ENCODE measurements at regions of chr16 and their contacts with region 1.

Region 1: GRCh38 chr16:67246934-67247697 is at the start of gene FHOD1:
- DNase-seq: peak; percentile 94
- H3K4me3 ChIP-seq: peak within 1 kb of the TSS; percentile 72 to 76 (median 72)
- H3K27ac ChIP-seq: peak within 1 kb of the TSS; percentile 63
- H3K4me1 ChIP-seq: peaks cover 57% of the 10 kb centered on the region
- H3K27me3 ChIP-seq: peaks cover 4% of the 10 kb centered on the region
- CTCF ChIP-seq: no peak
- total RNA-seq, gene FHOD1: 6.7 to 38.7 TPM

Region 2: GRCh38 chr16:66947302-66948065 is 299.6 kb before region 1 on chr16:
- CTCF ChIA-PET with region 1: no interaction called
- dilution Hi-C with region 1: no loop called
- in situ Hi-C with region 1: no loop called
- intact Hi-C with region 1: loop called (anchors 5 kb)
- DNase-seq: peak; percentile 78
- H3K4me3 ChIP-seq: peak overlapping the region; percentile 66 to 69 (median 68)
- H3K27ac ChIP-seq: peak overlapping the region; percentile 49
- H3K4me1 ChIP-seq: peaks cover 22% of the 10 kb centered on the region
- H3K27me3 ChIP-seq: no peaks in the 10 kb centered on the region
- CTCF ChIP-seq: peak; percentile 84 to 94

Region 3: GRCh38 chr16:67216612-67217490 is 30.3 kb before region 1 on chr16:
- CTCF ChIA-PET with region 1: no interaction called
- dilution Hi-C with region 1: no loop called
- in situ Hi-C with region 1: no loop called
- intact Hi-C with region 1: loop called (anchors 2 kb)
- DNase-seq: no peak
- H3K4me3 ChIP-seq: no peak overlapping the region
- H3K27ac ChIP-seq: no peak overlapping the region
- H3K4me1 ChIP-seq: peaks cover 16% of the 10 kb centered on the region
- H3K27me3 ChIP-seq: no peaks in the 10 kb centered on the region
- CTCF ChIP-seq: no peak

Region 4: GRCh38 chr16:67226804-67227557 is 20.1 kb before region 1 on chr16 and contains the start of gene TMEM208:
- CTCF ChIA-PET with region 1: interaction called, 4 read pairs
- dilution Hi-C with region 1: no loop called
- in situ Hi-C with region 1: no loop called
- intact Hi-C with region 1: loop called (anchors 1 kb)
- DNase-seq: peak; percentile 98
- H3K4me3 ChIP-seq: peak within 1 kb of the TSS; percentile 71 to 98 (median 86)
- H3K27ac ChIP-seq: peak within 1 kb of the TSS; percentile 73
- H3K4me1 ChIP-seq: peaks cover 11% of the 10 kb centered on the region
- H3K27me3 ChIP-seq: no peaks in the 10 kb centered on the region
- CTCF ChIP-seq: peak in 1 of 2 donors; percentile 22
- total RNA-seq, gene TMEM208: 24.5 to 43.1 TPM

Region 5: GRCh38 chr16:67279296-67280089 is 32.4 kb after region 1 on chr16 and contains the start of gene PLEKHG4:
- CTCF ChIA-PET with region 1: no interaction called
- dilution Hi-C with region 1: no loop called
- in situ Hi-C with region 1: no loop called
- intact Hi-C with region 1: loop called (anchors 2 kb)
- DNase-seq: peak; percentile 35
- H3K4me3 ChIP-seq: peak within 1 kb of the TSS in 2 of 3 experiments; percentile 19 to 26
- H3K27ac ChIP-seq: no peak within 1 kb of the TSS
- H3K4me1 ChIP-seq: peaks cover 29% of the 10 kb centered on the region
- H3K27me3 ChIP-seq: no peaks in the 10 kb centered on the region
- CTCF ChIP-seq: peak; percentile 38 to 57
- total RNA-seq, gene PLEKHG4: 1.2 to 1.7 TPM

Region 6: DNA sequence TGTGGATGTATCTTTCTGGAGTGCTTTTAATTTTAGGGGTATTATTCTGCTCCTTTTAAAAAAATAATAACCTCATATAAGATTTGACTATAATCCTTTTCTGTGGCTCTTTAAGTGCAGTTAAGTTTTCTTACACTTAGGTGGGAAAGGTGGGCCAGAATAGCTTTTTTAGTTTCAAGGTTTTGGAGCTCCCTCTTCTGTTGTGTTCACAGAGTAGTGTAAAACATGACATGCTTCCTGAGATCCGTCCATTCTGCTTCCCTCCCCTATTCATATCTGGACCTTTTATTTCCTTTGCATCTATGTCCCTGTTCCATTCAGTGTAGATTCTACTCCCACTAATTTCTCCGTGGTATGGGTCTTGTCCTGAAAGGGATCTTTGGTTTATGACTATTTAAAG is 92.3 kb after region 1 on chr16:
- CTCF ChIA-PET with region 1: interaction called, 10 read pairs
- dilution Hi-C with region 1: no loop called
- in situ Hi-C with region 1: no loop called
- intact Hi-C with region 1: no loop called
- DNase-seq: no peak
- H3K4me3 ChIP-seq: no peak overlapping the region
- H3K27ac ChIP-seq: no peak overlapping the region
- H3K4me1 ChIP-seq: peaks cover 5% of the 10 kb centered on the region
- H3K27me3 ChIP-seq: no peaks in the 10 kb centered on the region
- CTCF ChIP-seq: peak in 1 of 2 donors; percentile 34

Measured in mammary epithelial cell (primary cell).